ENCODE measurements at regions of chr12 and their contacts with region 1.

Region 1: GRCh38 chr12:96516472-96517430 is 27.4 kb downstream of the CFAP54 start:
- DNase-seq: peak; percentile 95
- H3K4me3 Mint-ChIP-seq: peak overlapping the region; percentile 52
- H3K27ac Mint-ChIP-seq: peak overlapping the region; percentile 68
- H3K4me1 Mint-ChIP-seq: peaks cover 14% of the 10 kb centered on the region
- H3K27me3 Mint-ChIP-seq: no peaks in the 10 kb centered on the region

Region 2: GRCh38 chr12:95473884-95474659 is 1042.7 kb before region 1 on chr12 and contains the start of gene METAP2:
- intact Hi-C with region 1: loop called (anchors 5 kb)
- DNase-seq: peak; percentile 97
- H3K4me3 Mint-ChIP-seq: peak within 1 kb of the TSS; percentile 94
- H3K27ac Mint-ChIP-seq: peak within 1 kb of the TSS; percentile 100
- H3K4me1 Mint-ChIP-seq: peaks cover 32% of the 10 kb centered on the region
- H3K27me3 Mint-ChIP-seq: no peaks in the 10 kb centered on the region
- total RNA-seq, gene METAP2: 125 and 133 TPM in 2 replicates

Region 3: DNA sequence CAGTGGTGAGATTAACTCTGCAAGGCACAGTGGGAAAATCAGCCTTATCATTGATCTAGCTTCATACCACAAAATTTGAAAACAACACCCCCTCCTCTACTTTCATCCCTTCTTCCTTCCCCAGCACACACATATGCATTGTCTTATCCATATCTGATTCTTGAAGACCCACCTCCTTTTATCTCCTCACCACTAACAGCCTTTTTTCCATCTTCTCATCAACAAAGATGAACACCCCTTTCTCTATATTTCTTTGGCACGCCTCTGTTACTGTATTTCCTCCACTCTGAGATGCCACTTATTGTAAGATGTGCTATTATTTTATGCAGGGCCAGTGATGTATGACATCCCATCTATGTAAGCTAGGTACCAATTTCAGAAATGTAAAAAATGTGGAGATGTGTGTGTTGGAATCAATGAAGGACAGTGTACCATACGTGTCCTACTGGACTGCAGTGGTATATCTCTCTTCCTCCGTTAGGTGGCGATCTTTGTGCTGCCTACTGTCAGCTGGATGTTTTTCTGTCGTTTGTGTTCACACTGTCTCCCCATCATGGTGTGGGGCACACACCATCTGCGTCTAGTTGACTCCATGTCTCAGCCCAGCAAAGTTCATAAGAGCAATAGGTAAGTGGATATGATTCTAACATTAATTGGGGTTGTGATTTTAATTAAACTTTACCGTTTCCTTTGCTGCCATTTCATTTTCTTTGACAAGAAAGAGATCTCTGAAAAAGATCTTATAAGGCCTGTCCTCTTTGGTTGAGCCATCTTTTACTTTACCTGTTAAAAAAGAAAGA is 598.4 kb before region 1 on chr12:
- intact Hi-C with region 1: loop called (anchors 1 kb)
- DNase-seq: peak; percentile 84
- H3K4me3 Mint-ChIP-seq: no peak overlapping the region
- H3K27ac Mint-ChIP-seq: no peak overlapping the region
- H3K4me1 Mint-ChIP-seq: no peaks in the 10 kb centered on the region
- H3K27me3 Mint-ChIP-seq: peaks cover 18% of the 10 kb centered on the region

Region 4: DNA sequence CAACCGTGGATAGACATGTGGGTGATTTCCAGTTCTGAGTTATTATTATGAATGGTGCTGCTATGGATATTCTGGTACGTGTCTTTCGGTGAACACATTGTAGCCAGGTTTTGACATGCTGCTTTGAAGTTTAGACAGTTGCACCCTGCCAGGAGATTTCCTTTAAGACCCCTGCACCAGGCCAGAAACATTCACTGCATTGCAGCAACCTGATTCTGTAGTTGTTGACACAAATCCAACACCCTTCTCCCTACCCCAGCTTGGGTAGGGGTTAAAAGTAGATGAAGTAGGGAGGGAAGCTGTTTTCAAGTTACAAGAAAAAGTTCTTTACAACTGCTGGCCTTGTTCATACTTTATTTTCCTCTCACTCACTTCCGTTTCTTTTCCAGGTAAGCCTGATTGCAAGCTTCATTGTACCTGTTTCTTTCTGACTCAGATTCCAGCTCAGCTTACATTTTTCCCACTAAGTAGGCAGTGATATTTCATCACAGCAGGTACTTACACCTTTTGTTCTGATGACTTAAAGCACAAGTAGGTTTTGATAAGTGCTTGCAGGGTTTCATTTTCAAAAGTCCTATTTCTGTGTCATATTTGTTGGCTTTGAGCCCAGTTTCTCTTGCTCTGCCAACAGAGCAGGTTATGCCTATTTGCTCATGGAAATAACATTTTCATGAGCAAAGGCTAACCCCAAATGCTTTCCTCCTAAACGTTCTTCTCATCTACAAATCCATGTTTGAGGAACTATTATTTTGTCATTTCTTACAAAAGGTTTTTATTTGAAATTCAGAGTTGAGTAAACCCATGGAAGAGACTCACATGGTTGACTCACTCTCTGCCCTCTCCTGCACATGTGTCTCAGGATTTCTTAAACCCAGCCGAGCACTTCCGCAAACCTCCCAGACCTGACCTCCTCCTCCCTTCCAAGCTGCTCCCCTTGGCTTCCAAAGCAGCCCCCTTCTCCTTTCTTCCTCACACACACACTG is 469.2 kb before region 1 on chr12:
- intact Hi-C with region 1: loop called (anchors 5 kb)
- DNase-seq: peak; percentile 73
- H3K4me3 Mint-ChIP-seq: peak overlapping the region; percentile 53
- H3K27ac Mint-ChIP-seq: peak overlapping the region; percentile 81
- H3K4me1 Mint-ChIP-seq: peaks cover 38% of the 10 kb centered on the region
- H3K27me3 Mint-ChIP-seq: no peaks in the 10 kb centered on the region

Region 5: DNA sequence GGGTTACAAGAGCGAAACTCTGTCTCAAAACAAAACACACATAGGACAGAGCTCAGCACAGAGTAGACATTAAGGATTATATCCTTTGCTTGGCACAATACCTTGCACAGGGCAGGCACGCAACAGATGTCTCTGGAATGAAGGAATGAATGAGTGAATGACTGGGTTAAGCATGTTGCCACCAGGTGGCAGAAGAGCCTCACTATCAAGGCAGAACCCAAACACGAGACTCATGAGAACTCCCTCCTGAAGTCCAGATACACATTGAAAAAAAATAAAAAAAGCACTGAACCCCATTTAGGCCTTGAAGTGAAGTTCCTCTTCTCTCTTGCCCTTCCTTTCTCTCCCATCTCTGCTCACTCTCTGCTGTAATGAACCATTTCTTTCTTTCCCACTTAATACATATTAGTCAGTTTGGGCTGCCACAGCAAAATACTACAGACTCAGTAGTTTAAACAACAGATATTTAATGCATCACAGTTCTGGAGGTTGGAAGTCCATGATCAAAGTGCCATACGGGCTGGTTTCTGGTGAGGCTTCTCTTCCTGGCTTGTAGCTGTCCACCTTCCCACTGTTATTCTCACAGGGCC is 454.8 kb before region 1 on chr12:
- intact Hi-C with region 1: loop called (anchors 1 kb)
- DNase-seq: peak; percentile 92
- H3K4me3 Mint-ChIP-seq: no peak overlapping the region
- H3K27ac Mint-ChIP-seq: no peak overlapping the region
- H3K4me1 Mint-ChIP-seq: peaks cover 24% of the 10 kb centered on the region
- H3K27me3 Mint-ChIP-seq: no peaks in the 10 kb centered on the region

Region 6: DNA sequence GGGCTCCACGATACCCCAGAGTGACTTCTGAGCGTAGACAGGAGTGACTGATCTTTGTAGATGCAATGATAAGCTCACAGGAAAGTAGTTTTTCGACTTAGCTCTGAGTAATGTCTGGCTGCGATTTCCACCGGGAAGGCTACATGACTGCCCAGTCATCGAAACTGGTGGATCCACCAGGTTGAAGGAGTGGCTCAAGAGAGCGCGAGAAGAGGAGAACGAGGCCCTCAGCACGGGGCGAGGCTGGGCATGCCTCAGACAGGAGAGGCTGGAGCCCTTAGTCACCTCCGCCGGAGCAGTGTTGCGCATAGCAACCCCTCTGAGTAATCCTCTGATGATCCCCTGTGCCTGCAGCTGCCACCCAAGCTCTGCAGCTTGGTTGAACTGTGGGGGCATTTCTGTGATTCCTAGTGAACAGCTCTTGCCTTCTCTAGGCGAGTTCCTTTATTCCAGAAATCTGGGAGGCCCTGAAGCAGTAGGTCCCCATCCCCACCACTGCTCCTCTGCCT is 297.0 kb before region 1 on chr12:
- intact Hi-C with region 1: loop called (anchors 1 kb)
- DNase-seq: no peak
- H3K4me3 Mint-ChIP-seq: no peak overlapping the region
- H3K27ac Mint-ChIP-seq: no peak overlapping the region
- H3K4me1 Mint-ChIP-seq: peaks cover 27% of the 10 kb centered on the region
- H3K27me3 Mint-ChIP-seq: no peaks in the 10 kb centered on the region

Region 7: GRCh38 chr12:96314723-96315122 is 202.0 kb before region 1 on chr12:
- intact Hi-C with region 1: no loop called
- DNase-seq: no peak
- H3K4me3 Mint-ChIP-seq: no peak overlapping the region
- H3K27ac Mint-ChIP-seq: no peak overlapping the region
- H3K4me1 Mint-ChIP-seq: peaks cover 13% of the 10 kb centered on the region
- H3K27me3 Mint-ChIP-seq: no peaks in the 10 kb centered on the region

Region 8: GRCh38 chr12:96445691-96446583 is 70.8 kb before region 1 on chr12:
- intact Hi-C with region 1: loop called (anchors 1 kb)
- DNase-seq: peak; percentile 90
- H3K4me3 Mint-ChIP-seq: peak overlapping the region; percentile 70
- H3K27ac Mint-ChIP-seq: peak overlapping the region; percentile 87
- H3K4me1 Mint-ChIP-seq: peaks cover 40% of the 10 kb centered on the region
- H3K27me3 Mint-ChIP-seq: no peaks in the 10 kb centered on the region

Region 9: DNA sequence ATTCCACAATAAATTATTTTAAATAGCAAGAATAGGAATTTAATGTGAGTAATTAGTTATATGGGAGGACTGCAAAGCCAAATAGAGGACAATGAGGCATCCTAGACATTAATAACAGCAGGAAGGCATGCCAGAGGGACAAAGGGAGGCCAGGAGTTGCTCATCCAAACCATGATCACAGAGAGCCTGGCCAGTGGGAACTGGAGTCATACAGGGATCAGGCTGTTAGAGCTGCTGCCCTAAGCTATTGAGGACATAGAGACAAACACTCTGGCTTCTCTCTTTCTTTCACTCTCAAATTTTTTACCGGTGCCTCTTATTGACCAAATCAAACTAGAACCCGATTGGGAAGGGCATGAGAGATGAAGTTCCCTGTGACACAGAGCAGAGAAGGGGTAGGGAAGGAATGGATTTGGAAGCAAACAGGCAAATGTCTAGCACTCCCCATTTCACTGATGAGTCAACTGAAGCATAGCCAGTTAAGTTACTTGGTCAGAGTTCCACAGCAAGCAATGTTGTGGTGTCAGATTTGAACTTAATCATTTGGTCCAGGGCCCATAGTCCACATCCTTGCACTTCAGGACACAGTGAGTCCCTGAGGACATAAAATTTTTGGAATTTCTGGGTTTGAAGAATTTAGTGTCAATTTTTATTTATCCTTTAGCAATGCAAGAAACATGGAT is 45.2 kb before region 1 on chr12:
- intact Hi-C with region 1: no loop called
- DNase-seq: no peak
- H3K4me3 Mint-ChIP-seq: no peak overlapping the region
- H3K27ac Mint-ChIP-seq: no peak overlapping the region
- H3K4me1 Mint-ChIP-seq: peaks cover 6% of the 10 kb centered on the region
- H3K27me3 Mint-ChIP-seq: peaks cover 10% of the 10 kb centered on the region

Region 10: GRCh38 chr12:96548384-96548783 is 31.6 kb after region 1 on chr12:
- intact Hi-C with region 1: no loop called
- DNase-seq: no peak
- H3K4me3 Mint-ChIP-seq: no peak overlapping the region
- H3K27ac Mint-ChIP-seq: no peak overlapping the region
- H3K4me1 Mint-ChIP-seq: no peaks in the 10 kb centered on the region
- H3K27me3 Mint-ChIP-seq: peaks cover 27% of the 10 kb centered on the region

Region 11: DNA sequence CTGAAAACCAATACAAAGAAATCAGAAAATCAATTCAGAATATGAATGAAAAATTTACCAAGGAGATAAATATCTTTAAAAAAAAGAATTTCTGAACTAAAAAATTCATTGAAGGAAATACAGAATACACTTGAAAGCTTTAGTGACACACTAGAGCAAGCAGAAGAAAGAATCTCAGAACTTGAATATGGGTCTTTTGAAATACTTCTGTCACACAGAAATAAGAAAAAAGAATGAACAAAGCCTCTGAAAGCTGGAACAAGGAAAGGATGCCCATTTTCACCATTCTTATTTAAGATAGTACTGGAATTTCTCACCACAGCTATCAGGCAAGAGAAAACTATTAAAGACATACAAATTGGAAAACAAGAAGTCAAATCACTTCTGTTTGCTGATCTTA is 287.2 kb after region 1 on chr12:
- intact Hi-C with region 1: no loop called
- DNase-seq: no peak
- H3K4me3 Mint-ChIP-seq: no peak overlapping the region
- H3K27ac Mint-ChIP-seq: no peak overlapping the region
- H3K4me1 Mint-ChIP-seq: no peaks in the 10 kb centered on the region
- H3K27me3 Mint-ChIP-seq: no peaks in the 10 kb centered on the region